Activated T-helper 1 cell treated with anti-CD3 and anti-CD28 coated beads, Interleukin-12 subunit alpha, Interleukin-12 subunit beta, Interleukin-2, Interleukin-4 antibody, amounts not matched to agents 30 ng/mL and 10 ng/mL and 1 ng/mL, durations not matched to agents 14 hours and 24 hours and 36 hours (primary cell): ENCODE measurements at regions of chr16 and their contacts with region 1.

Region 1: DNA sequence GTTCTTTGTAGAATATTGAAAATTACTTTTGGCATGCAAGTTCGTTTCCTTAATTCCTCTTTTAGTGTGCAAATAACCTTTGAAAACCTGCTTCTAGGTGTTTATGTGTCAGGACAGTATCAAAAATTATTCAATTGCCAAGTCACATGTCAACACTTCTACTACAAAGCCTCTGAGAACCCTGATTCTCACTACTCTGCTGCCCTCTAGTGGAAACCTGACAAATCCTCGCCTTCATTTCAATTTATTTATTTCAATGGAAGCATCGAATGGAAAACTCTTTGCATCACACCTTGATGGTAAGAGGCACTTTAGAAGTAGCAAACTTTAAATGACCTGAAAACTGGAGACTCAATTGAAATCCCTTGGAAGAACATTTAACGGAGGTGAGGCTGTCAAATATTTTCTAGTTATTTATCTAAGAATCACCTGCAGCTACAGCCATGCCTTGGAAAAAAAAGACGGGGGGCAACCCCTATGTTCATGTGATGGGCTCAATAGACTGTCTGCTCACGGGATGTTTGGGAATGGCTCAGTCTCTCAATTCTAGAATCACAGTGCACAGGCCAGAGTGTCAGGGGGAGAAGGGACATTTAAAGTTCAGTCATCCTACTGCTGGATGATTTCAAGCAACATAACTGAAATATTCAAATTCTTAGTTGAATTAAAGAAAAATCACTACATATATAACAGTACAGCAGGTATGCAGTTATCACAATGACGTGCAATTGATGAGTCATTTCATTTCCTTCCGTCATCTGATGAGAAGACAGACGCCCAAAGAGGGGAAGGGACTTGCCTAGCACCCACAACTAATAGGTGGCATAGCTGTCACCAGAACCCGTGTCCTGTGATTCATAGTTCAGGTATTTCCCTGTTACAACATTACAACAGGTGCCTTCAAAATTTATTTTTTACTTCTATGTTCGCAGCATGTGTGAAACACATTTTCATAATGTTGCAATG is 563.9 kb downstream of the TOX3 start:
- DNase-seq: peak; percentile 1
- H3K4me3 Mint-ChIP-seq: no peak overlapping the region
- H3K27ac Mint-ChIP-seq: no peak overlapping the region
- H3K4me1 Mint-ChIP-seq: no peaks in the 10 kb centered on the region
- H3K27me3 Mint-ChIP-seq: no peaks in the 10 kb centered on the region

Region 2: DNA sequence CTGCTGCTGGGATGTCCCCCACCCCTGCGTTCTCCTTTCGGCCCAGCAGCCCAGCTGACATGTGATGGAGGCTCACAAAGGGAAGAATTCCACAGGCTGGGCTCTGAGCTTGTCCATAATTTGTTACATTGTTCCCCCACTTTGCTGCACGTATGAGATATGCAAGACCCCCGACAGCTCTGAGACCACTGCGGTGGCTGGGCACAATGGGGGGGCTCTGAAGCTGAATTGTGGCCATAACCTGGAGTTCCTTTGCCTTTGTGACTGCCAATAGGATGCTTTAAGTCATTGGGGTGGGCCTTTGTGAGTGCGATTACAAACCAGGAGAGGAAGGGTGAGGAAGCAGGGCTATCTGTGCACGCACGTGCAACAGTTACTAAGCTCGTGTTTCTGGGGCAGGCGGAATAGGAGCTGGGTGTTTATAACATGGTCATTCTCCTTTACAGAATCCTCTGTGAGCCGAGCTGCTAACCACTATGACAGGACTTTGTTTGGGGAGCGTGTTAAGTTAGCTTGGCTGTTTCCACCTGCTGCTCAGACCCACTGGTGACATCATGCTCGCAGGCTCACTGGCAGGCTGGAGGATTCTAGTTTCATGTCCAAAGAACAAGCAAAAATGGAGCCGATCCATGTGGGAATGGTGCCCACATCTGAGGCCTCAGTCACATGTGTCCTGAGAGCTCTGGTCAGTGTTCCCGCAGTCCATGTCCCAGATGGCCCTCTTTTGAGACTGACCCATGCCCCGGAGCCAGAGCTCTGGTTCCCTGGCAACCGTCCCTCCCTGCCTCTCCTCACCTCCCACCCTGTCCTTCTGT is 623.6 kb before region 1 on chr16:
- intact Hi-C with region 1: no loop called
- DNase-seq: no peak
- H3K4me3 Mint-ChIP-seq: no peak overlapping the region
- H3K27ac Mint-ChIP-seq: no peak overlapping the region
- H3K4me1 Mint-ChIP-seq: no peaks in the 10 kb centered on the region
- H3K27me3 Mint-ChIP-seq: no peaks in the 10 kb centered on the region

Region 3: DNA sequence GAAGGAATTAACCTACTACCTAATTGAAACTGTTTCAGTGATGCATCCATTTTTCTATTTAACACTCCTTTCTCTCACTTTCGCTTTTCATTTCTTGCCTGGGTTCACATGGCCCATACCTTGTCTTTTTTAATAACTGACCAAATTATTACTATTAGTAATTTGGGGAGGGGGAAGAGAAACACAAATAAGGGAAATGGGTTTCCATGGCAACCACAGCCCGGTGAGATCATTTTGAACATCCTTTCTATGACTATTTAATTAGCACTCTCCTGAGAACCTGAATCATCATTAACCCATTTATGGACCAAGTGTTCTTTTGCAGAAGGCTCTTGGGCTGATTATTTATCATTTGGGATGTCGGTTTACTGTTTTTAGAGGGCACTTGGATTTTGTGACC is 203.8 kb before region 1 on chr16:
- intact Hi-C with region 1: no loop called
- DNase-seq: no peak
- H3K4me3 Mint-ChIP-seq: no peak overlapping the region
- H3K27ac Mint-ChIP-seq: no peak overlapping the region
- H3K4me1 Mint-ChIP-seq: no peaks in the 10 kb centered on the region
- H3K27me3 Mint-ChIP-seq: no peaks in the 10 kb centered on the region

Region 4: GRCh38 chr16:51818342-51818944 is 164.6 kb before region 1 on chr16:
- intact Hi-C with region 1: loop called (anchors 5 kb)
- DNase-seq: no peak
- H3K4me3 Mint-ChIP-seq: no peak overlapping the region
- H3K27ac Mint-ChIP-seq: no peak overlapping the region
- H3K4me1 Mint-ChIP-seq: no peaks in the 10 kb centered on the region
- H3K27me3 Mint-ChIP-seq: no peaks in the 10 kb centered on the region

Region 5: DNA sequence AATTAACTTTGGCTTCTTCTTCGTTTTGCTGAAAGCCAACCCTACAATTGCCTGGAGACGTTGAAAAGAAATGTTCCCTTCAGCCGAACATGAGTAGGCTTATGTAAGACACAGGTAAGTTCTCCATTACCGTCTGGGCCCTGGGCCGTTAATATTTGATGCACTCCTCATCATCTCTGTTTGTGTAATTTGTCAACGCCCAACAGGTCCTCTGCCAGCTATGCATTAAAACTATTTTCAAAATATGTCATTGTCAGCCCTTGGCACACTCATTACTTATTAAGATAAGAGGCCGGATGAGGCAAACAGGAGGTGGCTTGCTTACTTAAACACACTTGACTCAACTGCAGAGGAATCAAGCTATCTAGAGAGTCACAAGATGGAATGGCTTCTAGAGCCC is 19.0 kb after region 1 on chr16:
- intact Hi-C with region 1: no loop called
- DNase-seq: no peak
- H3K4me3 Mint-ChIP-seq: no peak overlapping the region
- H3K27ac Mint-ChIP-seq: no peak overlapping the region
- H3K4me1 Mint-ChIP-seq: no peaks in the 10 kb centered on the region
- H3K27me3 Mint-ChIP-seq: no peaks in the 10 kb centered on the region